HEK293 (cell line): ENCODE measurements at regions of chr12 and their contacts with region 1.

Region 1: DNA sequence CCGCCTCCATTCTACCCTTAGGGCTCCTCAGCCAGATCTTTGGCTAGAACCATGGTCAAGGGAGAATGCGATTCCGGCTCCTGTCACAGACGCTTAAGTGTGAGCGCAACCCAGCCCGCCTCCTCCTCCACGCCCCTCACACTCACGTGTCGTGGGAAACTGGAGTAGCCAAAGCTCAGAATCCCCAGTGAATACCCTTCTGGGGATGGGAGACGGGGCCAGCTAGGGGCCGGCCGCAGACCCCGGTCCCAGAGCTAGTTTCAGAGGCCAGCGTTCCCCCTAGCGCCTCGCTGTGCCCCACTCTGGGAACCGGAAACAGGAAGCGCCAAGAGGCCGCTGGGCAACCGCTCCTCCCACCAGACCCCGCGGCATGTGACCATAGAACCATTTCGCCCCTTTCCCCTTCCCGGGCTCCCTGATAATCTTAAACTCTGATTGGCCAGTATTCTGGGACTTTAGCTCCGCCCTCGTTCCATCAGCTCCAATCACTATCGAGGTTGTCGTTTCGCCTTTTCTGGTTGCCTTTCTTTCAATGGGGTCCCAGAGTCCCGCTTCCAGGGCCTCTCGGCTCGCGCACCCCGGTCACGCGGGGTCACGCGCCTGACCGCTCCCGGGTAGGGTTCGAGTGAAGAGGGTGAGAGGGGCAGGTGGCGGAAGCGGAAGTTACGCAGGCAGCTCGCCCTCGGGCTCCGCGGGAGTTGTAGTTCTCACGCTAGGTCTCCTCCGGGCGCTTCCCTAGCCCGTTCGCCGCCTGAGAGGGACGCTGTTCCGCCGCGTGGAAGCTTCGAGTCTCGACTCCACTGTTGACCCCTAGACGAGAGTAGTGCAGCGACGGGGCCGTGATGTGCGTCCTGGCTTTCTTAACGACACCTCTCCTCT is at the start of gene M6PR:
- H3K4me3 ChIP-seq: peak within 1 kb of the TSS; percentile 94
- H3K27ac ChIP-seq: peak within 1 kb of the TSS; percentile 82
- H3K4me1 ChIP-seq: peaks cover 9% of the 10 kb centered on the region
- CTCF ChIP-seq: peak; percentile 96

Region 2: DNA sequence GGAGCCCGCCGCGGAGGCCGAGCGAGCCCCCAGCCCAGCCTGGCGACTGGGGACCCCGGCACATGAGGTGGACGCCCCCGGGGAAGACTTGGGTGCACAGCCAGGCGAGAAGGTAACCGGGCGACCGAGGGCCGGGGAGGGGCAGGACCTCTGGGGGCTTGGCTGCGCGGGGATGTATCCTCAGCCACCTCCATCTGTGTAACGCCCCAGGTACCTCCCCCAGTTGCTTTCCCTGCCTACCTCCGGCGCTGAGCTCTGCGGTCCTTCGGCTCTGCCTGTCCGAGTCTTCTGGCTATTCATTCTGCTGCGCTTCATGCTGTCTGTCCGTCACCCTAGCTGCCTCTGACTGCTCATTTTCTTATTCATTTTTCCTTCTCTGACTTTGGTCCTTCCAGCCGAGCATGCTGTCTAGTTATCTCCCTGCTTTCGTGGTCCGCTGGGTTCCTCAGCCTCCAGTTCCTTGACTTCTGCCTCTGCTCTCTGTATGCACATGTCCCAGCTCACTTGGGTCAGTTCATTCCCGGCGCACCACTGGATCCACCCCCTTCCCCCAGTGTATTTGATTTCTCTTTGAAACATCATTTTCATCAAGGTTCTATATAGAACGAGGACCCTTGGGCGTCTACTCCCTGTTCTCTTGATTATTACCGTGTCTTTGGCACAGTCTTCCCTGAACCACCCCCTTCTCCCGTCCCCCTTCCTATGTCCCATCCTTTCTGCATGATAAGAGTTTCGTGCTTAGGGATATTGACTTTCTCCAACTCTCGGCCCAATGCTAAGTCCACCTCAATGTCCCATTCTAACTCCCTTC is 34.7 kb before region 1 on chr12:
- CTCF ChIA-PET with region 1: interaction called, 4 read pairs
- POLR2A ChIA-PET with region 1: interaction called, 21 read pairs
- H3K4me3 ChIP-seq: peak overlapping the region; percentile 68
- H3K27ac ChIP-seq: peak overlapping the region; percentile 68; the same call in 1 of the 2 replicates
- H3K4me1 ChIP-seq: peaks cover 13% of the 10 kb centered on the region
- CTCF ChIP-seq: no peak

Region 3: GRCh38 chr12:9049520-9050133 is 100.0 kb after region 1 on chr12:
- CTCF ChIA-PET with region 1: interaction called, 26 read pairs
- POLR2A ChIA-PET with region 1: no interaction called
- H3K4me3 ChIP-seq: no peak overlapping the region
- H3K27ac ChIP-seq: no peak overlapping the region
- H3K4me1 ChIP-seq: no peaks in the 10 kb centered on the region
- CTCF ChIP-seq: no peak

Region 4: DNA sequence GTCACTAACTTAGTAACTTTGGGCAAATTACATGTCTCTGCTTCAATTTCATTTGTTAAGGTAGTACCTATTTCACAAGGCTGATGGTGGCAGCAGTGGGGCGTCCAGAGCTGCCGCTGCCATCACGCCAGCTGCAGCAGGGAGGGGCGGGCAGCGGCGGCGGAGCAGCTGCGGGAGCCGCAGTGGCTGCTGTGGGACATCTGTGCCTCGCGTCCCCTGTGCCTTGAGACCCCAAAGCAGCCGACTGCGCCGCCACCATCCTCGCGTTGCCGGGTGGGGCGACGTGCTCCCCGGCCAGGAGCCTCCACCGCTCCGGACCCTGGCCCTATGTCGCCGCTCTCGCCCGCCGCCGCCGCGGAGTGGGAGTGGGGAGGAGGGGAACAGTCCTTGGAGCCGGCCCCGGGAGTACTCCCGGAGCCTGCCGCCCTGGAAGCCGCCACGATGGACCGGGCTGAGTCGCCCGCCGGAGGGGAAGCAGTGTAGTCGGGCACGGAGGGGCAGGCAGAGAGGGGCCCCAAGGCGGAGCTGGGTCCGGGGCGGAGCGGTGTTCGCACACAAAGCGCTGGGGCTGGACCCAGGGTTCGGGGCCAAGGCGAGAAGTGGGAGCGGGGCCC is 114.7 kb after region 1 on chr12:
- CTCF ChIA-PET with region 1: no interaction called
- POLR2A ChIA-PET with region 1: no interaction called
- H3K4me3 ChIP-seq: peak overlapping the region; percentile 86
- H3K27ac ChIP-seq: peak overlapping the region; percentile 88
- H3K4me1 ChIP-seq: peaks cover 5% of the 10 kb centered on the region
- CTCF ChIP-seq: peak; percentile 68